Ascending aorta (tissue), 2 donors: ENCODE measurements at regions of chr16 and their contacts with region 1.

Region 1: DNA sequence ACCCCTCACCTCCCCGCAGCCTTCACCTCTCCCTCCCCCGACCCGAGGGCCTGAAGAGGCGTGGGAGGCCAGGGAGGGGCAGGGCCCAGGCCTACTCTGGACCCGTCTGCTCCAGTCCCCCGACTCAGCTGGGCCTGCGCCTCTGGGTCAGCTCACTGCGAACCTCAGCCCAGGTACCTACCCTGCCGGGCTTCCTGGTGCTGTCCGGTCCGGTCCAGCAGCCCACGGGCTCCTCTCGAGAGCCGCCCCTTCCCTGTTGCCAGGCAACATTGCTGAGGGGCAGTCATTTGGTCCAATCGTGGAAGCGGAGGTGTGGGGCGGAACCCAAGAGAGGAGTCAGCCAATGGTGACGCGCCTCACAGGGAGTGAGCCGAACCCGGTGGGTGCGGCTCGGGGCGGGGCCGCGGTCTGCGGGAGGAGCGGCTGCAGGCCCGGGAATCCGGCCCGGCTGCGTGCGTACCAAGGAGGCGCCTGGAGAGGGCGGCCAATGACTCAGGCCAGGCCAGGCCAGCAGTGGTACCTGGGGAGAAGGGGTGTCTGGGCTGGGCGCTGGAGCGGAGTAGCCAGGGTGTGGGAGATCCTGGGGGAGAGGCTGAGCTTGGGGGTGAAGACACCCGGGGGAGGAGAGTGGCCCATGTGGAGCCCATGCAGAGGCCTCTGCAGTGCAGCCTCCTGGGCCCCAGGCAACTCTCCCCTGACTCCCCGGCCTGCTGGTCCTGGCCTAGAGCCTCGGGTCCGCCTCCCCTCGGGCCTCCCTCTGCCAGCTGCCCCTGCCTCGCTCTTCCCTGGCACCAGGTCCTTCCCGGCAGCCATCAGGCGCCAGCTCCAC is at the start of gene MEAK7:
- DNase-seq: peak; percentile 97 to 99
- H3K4me3 ChIP-seq: peak within 1 kb of the TSS; percentile 75 to 78
- H3K27ac ChIP-seq: peak within 1 kb of the TSS; percentile 83 to 92
- H3K4me1 ChIP-seq: peaks cover 0 to 7% of the 10 kb centered on the region in 2 donors
- H3K27me3 ChIP-seq: no peaks in the 10 kb centered on the region
- CTCF ChIP-seq: peak in 2 of 3 experiments; percentile 5 to 18
- total RNA-seq, gene MEAK7: 5.4 TPM

Region 2: GRCh38 chr16:84116720-84117493 is 387.7 kb before region 1 on chr16 and contains the start of gene MBTPS1:
- intact Hi-C with region 1: loop called (anchors 10 kb)
- DNase-seq: peak; percentile 89 to 99
- H3K4me3 ChIP-seq: peak within 1 kb of the TSS; percentile 84 to 90
- H3K27ac ChIP-seq: peak within 1 kb of the TSS; percentile 86 to 93
- H3K4me1 ChIP-seq: peaks cover 0 to 13% of the 10 kb centered on the region in 2 donors
- H3K27me3 ChIP-seq: no peaks in the 10 kb centered on the region
- CTCF ChIP-seq: no peak
- total RNA-seq, gene MBTPS1: 95.6 TPM

Region 3: DNA sequence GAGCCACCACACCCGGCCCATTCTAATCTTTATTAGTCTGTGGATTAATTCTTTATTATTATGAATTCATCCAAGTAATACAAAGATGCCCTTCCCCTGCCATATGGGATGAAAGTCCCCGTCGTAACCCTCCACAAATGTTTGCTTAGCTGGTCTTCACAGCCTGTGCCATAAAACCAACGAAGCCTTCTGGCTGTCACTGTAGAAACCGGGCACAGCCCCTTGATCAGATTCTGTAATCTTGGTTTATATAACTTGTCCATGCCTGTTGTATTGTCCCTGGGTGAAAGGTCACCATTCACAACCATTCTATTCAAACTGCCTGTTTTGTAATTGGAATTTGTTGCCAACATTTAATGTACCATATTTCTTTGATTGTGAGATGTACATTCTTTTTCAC is 69.8 kb before region 1 on chr16:
- intact Hi-C with region 1: no loop called
- DNase-seq: no peak
- H3K4me3 ChIP-seq: no peak overlapping the region
- H3K27ac ChIP-seq: no peak overlapping the region
- H3K4me1 ChIP-seq: no peaks in the 10 kb centered on the region
- H3K27me3 ChIP-seq: no peaks in the 10 kb centered on the region
- CTCF ChIP-seq: no peak

Region 4: DNA sequence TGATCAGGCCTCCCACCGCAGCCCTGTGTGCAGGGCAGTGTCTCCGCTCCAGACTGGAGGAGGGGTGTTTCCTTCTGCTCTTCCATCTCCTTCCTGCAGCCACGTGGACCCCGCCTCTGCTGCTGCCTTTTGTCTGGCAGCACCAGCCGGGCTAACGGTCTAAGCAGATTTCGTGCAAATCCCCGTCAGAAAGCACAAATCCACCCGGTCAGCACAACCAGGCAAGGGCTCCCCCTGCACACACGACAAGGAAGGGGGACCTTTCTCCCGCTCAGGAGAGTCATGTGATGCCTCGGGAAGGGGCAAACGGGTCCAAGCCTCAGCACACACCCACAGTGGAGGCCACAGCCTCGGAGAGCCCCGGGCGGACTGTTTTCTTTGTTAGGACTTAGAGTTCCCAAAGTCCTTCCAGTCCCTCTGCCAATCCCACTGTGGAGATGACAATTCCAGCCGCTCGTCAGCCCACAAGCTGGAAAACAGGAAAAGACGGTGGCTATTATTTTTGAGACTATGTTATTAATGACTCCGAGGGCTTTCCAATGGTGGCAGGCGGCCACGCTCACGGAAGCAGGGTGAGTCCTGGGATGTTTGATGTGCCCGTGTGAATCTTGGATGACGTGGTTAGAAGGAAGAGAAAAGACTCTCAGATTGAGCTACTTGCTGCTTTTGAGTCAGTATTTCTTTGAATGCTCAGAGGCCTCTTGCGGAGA is 22.3 kb after region 1 on chr16:
- intact Hi-C with region 1: loop called (anchors 2 kb)
- DNase-seq: no peak
- H3K4me3 ChIP-seq: peak overlapping the region; percentile 5 to 47
- H3K27ac ChIP-seq: peak overlapping the region; percentile 69 to 77
- H3K4me1 ChIP-seq: peaks cover 19 to 24% of the 10 kb centered on the region in 2 donors
- H3K27me3 ChIP-seq: no peaks in the 10 kb centered on the region
- CTCF ChIP-seq: no peak